BJ (cell line): ENCODE measurements at regions of chr7 and their contacts with region 1.

Region 1: DNA sequence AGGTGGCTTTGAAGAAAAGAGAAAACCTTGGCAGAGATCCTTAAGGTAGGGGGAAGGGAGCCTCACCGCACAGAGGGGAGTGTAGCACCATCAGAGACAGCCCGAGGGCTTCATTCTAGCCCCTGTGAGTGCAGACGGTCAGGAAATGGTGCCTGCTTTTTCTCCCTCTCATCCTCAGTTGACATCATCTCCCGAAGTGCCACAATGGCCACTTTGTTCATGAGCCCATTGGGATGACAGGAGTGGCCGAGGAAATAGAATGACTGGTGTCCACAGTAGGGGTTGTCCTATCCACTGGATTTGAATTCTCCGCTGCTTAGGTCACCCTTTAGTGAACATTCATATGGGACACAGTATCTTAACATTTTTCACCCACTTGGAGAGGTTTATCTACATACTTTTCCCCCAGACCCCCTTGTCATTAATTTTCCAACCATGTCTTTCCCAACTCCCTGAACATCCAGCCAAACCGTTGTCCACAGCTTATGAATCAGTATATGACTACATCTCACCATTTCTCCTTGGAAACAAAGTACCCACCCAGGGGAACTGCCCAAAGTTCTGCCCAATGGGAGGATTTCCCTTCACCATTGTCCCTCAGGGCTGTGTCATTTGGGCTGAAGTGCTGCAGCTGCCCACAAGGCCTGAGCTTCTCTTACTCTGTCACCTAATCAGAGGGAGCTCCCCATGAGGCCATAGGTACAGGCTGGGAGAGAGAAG is 108.8 kb downstream of the ADCY1 start:
- DNase-seq: no peak
- H3K4me3 ChIP-seq: no peak overlapping the region
- H3K27me3 ChIP-seq: no peaks in the 10 kb centered on the region
- CTCF ChIP-seq: no peak

Region 2: GRCh38 chr7:45663167-45663921 is 19.7 kb before region 1 on chr7:
- CTCF ChIA-PET with region 1: interaction called, 10 read pairs
- POLR2A ChIA-PET with region 1: no interaction called
- DNase-seq: no peak
- H3K4me3 ChIP-seq: no peak overlapping the region
- H3K27me3 ChIP-seq: no peaks in the 10 kb centered on the region
- CTCF ChIP-seq: peak; percentile 78